ENCODE measurements at regions of chr11 and their contacts with region 1.

Region 1: GRCh38 chr11:12673924-12674570 is at the start of gene TEAD1:
- DNase-seq: peak; percentile 95
- H3K4me3 ChIP-seq: peak within 1 kb of the TSS; percentile 85 to 94 (median 89)
- H3K27ac ChIP-seq: peak within 1 kb of the TSS; percentile 71
- H3K4me1 ChIP-seq: peaks cover 22% of the 10 kb centered on the region
- H3K27me3 ChIP-seq: no peaks in the 10 kb centered on the region
- CTCF ChIP-seq: no peak
- POLR2A ChIP-seq: peak; percentile 87
- total RNA-seq, gene TEAD1: 43.2 and 49.0 TPM in 2 replicates

Region 2: DNA sequence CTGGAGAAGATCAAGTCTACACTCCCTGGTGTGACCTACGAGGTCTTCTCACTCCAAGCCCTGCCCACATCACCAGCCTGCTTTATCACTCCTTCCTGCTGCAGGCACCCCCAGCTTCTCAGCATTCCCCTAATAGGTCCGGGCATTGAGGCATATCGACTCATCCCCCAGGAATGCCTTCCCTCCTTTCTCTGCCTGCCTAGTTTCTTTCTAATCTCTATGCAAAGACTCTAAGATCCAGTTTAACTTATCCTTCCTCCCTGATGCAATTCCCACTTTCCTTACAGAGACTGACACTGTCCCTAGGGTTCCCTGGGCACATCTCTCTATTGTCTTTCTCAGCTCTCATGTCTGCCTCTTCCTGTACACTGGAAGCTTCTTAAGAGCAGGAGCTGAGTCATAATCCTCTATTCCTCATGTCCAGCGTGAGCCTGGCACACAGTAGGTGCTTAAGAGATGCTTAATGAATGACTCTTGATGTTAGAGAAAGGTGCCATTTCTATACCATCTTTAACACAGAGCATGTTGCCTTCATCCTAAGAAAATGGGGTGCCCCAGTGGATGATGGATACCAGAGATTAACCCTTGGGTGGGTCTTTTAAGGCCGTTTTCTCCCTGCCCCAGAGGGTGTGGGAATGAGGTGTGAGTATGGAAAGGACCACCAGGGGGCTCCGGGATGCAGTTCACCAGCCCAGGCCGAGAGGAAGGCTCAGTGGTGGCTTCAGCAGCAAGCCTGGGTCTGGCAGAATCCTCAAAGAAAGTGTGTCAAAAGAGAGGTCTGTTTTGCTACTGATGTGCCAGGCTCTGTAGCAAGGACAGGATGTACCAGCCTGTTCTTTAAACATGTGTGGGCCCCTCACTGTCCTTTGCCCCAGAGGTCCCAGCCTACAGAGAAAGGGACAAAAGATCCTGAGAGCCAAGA is 262.0 kb before region 1 on chr11:
- CTCF ChIA-PET with region 1: no interaction called
- POLR2A ChIA-PET with region 1: no interaction called
- dilution Hi-C with region 1: no loop called
- intact Hi-C with region 1: loop called (anchors 5 kb)
- DNase-seq: peak; percentile 82
- H3K4me3 ChIP-seq: no peak overlapping the region
- H3K27ac ChIP-seq: peak overlapping the region; percentile 85
- H3K4me1 ChIP-seq: peaks cover 17% of the 10 kb centered on the region
- H3K27me3 ChIP-seq: no peaks in the 10 kb centered on the region
- CTCF ChIP-seq: peak; percentile 88 to 90
- POLR2A ChIP-seq: peak; percentile 19

Region 3: DNA sequence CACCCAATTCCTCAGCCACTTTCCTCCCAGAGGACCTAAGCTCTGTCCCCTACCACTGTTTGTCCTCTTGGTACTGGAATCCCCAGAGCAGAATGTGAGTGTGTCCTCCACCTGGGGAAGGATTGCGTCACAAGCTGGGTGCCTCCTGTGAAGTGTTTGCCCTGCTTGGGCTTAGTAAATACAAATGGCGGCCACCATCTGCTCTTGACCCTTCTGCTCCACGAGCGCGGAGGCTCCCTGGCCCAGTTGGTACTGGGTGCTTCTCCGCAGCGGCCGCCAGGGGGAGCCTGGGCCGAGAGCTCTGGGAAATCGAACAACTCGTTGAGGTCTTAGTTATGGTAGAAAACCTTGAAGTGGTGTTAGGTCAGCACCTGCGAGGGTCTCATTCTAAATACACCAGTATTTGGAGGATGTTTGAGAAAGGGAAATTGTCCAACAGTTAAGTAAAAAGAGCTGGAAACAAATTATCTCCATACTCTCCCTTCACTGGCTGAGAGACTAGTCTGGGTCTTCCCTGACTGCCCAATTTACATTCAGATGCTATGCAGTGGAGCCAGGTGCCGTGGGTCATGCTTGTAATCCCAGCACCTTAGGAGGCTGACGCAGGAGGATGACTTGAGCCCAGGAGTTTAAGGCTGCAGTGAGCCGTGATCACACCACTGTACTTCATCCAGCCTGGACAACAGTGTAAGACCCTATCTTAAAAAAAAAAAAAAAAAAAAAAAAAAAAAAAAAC is 74.5 kb before region 1 on chr11:
- CTCF ChIA-PET with region 1: interaction called, 12 read pairs
- POLR2A ChIA-PET with region 1: no interaction called
- dilution Hi-C with region 1: no loop called
- intact Hi-C with region 1: loop called (anchors 5 kb)
- DNase-seq: peak; percentile 18
- H3K4me3 ChIP-seq: no peak overlapping the region
- H3K27ac ChIP-seq: no peak overlapping the region
- H3K4me1 ChIP-seq: peaks cover 7% of the 10 kb centered on the region
- H3K27me3 ChIP-seq: no peaks in the 10 kb centered on the region
- CTCF ChIP-seq: peak; percentile 76 to 77
- POLR2A ChIP-seq: no peak

Region 4: DNA sequence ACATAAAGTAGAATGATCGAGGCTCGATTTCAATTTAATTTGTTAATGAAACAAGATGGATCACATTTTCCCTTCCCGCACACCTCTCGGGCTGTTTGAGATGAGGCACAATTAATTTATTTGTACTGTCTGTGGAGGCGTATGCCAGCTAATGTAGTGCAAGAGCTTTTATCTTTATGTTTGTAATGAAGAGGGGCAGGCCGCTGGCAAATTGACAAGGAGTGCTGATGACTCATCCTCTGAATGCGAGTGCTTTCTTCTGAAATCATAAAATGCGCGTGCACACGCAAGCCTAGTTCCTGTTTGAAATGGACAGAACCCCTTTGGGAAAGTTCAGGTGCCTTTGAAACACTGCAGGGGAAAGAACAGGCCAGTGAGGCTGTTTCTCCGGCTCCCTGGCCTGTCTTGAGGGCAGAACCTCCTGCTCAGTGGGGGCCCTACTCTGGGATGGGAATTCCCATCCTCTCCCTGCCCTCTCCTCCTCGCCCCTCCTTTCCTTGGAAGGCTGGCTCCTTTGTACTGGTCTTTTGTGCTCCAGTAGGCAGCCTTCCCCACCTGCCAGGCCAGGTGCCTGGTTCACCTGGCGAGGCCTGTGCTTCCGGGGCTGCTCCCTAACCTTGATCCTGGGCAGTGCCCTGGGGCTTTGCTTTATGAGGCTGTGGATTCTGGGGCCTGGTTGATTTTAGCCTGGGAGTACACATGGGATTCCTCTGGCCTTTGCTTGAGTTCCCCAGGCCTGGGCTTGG is 50.4 kb after region 1 on chr11:
- CTCF ChIA-PET with region 1: interaction called, 5 read pairs
- POLR2A ChIA-PET with region 1: no interaction called
- dilution Hi-C with region 1: no loop called
- intact Hi-C with region 1: loop called (anchors 2 kb)
- DNase-seq: peak; percentile 96
- H3K4me3 ChIP-seq: no peak overlapping the region
- H3K27ac ChIP-seq: peak overlapping the region; percentile 78
- H3K4me1 ChIP-seq: peaks cover 43% of the 10 kb centered on the region
- H3K27me3 ChIP-seq: no peaks in the 10 kb centered on the region
- CTCF ChIP-seq: no peak
- POLR2A ChIP-seq: no peak

Region 5: GRCh38 chr11:12813371-12814225 is 139.6 kb after region 1 on chr11:
- CTCF ChIA-PET with region 1: interaction called, 6 read pairs
- POLR2A ChIA-PET with region 1: no interaction called
- dilution Hi-C with region 1: no loop called
- intact Hi-C with region 1: loop called (anchors 1 kb)
- DNase-seq: peak; percentile 17
- H3K4me3 ChIP-seq: no peak overlapping the region
- H3K27ac ChIP-seq: no peak overlapping the region
- H3K4me1 ChIP-seq: peaks cover 15% of the 10 kb centered on the region
- H3K27me3 ChIP-seq: no peaks in the 10 kb centered on the region
- CTCF ChIP-seq: no peak
- POLR2A ChIP-seq: no peak

Region 6: DNA sequence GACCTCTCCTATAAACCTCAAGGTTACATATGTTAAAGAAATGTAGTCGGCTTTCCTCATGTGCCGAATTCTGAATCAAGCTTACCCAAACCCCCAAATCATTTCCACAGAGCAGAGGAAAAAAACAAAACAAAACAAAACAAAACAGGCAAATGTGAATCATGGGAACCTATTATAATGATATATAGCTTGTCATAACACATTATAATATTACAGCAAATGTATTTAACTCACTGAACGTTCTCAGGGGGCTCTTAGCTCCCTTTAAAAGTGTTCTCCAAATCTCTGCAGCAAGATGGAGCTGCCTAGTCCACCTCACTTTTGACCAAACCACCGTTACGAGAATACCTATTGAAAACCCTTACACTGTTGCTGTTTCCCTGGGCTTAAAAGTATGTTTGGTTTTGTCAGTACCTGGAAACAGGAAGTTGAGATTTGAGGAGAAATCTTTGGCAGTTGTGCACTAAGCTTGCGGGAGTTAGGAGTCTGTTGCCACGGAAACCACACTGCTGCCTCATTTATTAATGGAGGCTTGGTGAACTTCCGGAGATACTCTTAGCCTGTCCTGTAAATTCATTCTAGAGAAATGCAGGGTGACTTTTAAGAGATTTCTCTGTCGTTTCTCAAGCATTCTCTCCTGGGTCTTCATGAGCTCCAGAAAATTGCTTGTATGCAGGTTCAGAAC is 168.0 kb after region 1 on chr11:
- CTCF ChIA-PET with region 1: interaction called, 3 read pairs
- POLR2A ChIA-PET with region 1: no interaction called
- dilution Hi-C with region 1: no loop called
- intact Hi-C with region 1: loop called (anchors 2 kb)
- DNase-seq: peak; percentile 85
- H3K4me3 ChIP-seq: peak overlapping the region in 1 of 3 experiments; percentile 30
- H3K27ac ChIP-seq: peak overlapping the region; percentile 56
- H3K4me1 ChIP-seq: peaks cover 38% of the 10 kb centered on the region
- H3K27me3 ChIP-seq: no peaks in the 10 kb centered on the region
- CTCF ChIP-seq: no peak
- POLR2A ChIP-seq: no peak

Region 7: GRCh38 chr11:12888525-12889158 is 214.6 kb after region 1 on chr11:
- CTCF ChIA-PET with region 1: interaction called, 24 read pairs
- POLR2A ChIA-PET with region 1: no interaction called
- dilution Hi-C with region 1: no loop called
- intact Hi-C with region 1: loop called (anchors 1 kb)
- DNase-seq: peak; percentile 96
- H3K4me3 ChIP-seq: no peak overlapping the region
- H3K27ac ChIP-seq: no peak overlapping the region
- H3K4me1 ChIP-seq: peaks cover 9% of the 10 kb centered on the region
- H3K27me3 ChIP-seq: no peaks in the 10 kb centered on the region
- CTCF ChIP-seq: peak; percentile 82 to 86
- POLR2A ChIP-seq: no peak

Region 8: GRCh38 chr11:13040969-13041561 is 367.0 kb after region 1 on chr11:
- CTCF ChIA-PET with region 1: no interaction called
- POLR2A ChIA-PET with region 1: no interaction called
- dilution Hi-C with region 1: no loop called
- intact Hi-C with region 1: no loop called
- DNase-seq: no peak
- H3K4me3 ChIP-seq: no peak overlapping the region
- H3K27ac ChIP-seq: no peak overlapping the region
- H3K4me1 ChIP-seq: no peaks in the 10 kb centered on the region
- H3K27me3 ChIP-seq: peaks cover 24 to 38% of the 10 kb centered on the region in 2 experiments
- CTCF ChIP-seq: no peak
- POLR2A ChIP-seq: no peak

Region 9: GRCh38 chr11:13126430-13126829 is 452.4 kb after region 1 on chr11:
- CTCF ChIA-PET with region 1: no interaction called
- POLR2A ChIA-PET with region 1: no interaction called
- dilution Hi-C with region 1: no loop called
- intact Hi-C with region 1: no loop called
- DNase-seq: no peak
- H3K4me3 ChIP-seq: no peak overlapping the region
- H3K27ac ChIP-seq: no peak overlapping the region
- H3K4me1 ChIP-seq: no peaks in the 10 kb centered on the region
- H3K27me3 ChIP-seq: peaks cover 2 to 4% of the 10 kb centered on the region in 2 experiments
- CTCF ChIP-seq: no peak
- POLR2A ChIP-seq: no peak

Measured in endothelial cell of umbilical vein (primary cell).